ENCODE measurements at regions of chr15 and their contacts with region 1.

Region 1: DNA sequence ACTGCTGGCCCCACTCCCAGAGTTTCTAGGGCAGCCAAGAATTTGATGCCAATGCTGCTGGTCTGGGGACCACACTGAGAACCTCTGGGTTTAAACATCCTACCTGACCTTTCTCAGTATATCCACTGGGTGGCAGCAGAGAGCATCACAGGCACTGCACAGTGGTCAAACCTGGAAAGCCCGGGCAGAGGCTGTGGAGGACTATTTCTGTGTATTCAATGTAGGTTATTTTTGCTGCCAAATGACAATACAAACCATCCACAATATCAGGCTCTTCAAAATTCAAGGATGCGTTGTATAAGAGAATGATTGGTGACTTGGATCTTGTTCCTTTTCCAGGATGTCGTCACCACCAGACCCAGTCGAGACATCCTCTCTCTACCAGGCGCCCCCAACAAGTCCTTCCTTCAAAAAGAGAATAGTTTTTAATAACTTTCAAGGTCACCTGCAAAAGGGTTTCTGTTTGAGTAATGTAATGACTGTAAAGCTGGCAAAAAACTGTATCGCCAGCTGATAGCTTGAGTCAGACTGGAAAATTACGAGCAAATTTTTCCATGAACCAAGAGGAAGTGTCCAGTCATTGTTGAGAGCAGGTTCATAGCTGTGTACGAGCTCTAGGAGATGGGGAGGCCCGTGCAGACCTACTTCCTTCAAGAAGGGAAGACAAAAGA is 30.5 kb upstream of the MYZAP start:
- DNase-seq: peak; percentile 70 to 82 (median 80)
- ATAC-seq: peak; percentile 84 to 92 (median 88)
- H3K4me3 ChIP-seq: peak overlapping the region in 5 of 12 donors; percentile 1 to 36 (median 18)
- H3K27ac ChIP-seq: peak overlapping the region; percentile 6 to 82 (median 72)
- H3K4me1 ChIP-seq: peaks cover 0 to 36% (median 20%) of the 10 kb centered on the region in 12 donors
- H3K27me3 ChIP-seq: no peaks in the 10 kb centered on the region
- CTCF ChIP-seq: peak; percentile 84 to 97 (median 93)
- POLR2A ChIP-seq: no peak

Region 2: DNA sequence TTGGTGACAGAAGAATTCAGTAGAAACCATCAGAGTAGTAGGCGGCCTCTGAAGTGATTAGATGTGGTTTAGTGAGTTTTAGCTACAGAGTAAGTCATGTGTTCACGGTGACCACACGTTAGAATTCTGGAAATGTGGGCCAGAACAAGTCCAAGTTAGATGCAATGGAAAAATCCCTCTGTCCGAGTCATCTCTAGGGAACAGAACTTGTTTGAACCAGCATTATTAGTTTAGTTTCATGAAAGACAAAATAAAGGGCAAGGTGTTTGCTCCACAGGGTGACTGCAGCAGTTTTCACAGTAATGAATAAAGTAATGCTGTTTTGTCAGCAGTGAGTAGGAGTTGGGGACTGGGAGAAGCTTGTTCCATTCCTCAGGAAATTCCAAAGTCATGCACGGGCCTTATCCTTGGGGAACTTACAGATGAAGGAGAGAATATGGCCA is 84.6 kb before region 1 on chr15:
- intact Hi-C with region 1: no loop called
- DNase-seq: no peak
- ATAC-seq: peak; percentile 30 to 75 (median 74)
- H3K4me3 ChIP-seq: no peak overlapping the region
- H3K27ac ChIP-seq: peak overlapping the region in 5 of 12 donors; percentile 12 to 63 (median 52)
- H3K4me1 ChIP-seq: peaks cover 0 to 22% (median 0%) of the 10 kb centered on the region in 12 donors
- H3K27me3 ChIP-seq: no peaks in the 10 kb centered on the region
- CTCF ChIP-seq: no peak
- POLR2A ChIP-seq: no peak

Region 3: GRCh38 chr15:57611938-57612337 is 50.8 kb after region 1 on chr15:
- intact Hi-C with region 1: loop called in 5 of 10 experiments (anchors 2 to 10 kb)
- DNase-seq: peak in 2 of 5 donors; percentile 54 to 67
- ATAC-seq: peak; percentile 34 to 73 (median 42)
- H3K4me3 ChIP-seq: no peak overlapping the region
- H3K27ac ChIP-seq: peak overlapping the region; percentile 69 to 96 (median 82)
- H3K4me1 ChIP-seq: peaks cover 5 to 82% (median 40%) of the 10 kb centered on the region in 12 donors
- H3K27me3 ChIP-seq: no peaks in the 10 kb centered on the region
- CTCF ChIP-seq: peak; percentile 9 to 59 (median 42)
- POLR2A ChIP-seq: no peak

Region 4: GRCh38 chr15:57647791-57648130 is 86.6 kb after region 1 on chr15:
- intact Hi-C with region 1: loop called in 3 of 10 experiments (anchors 5 kb)
- DNase-seq: peak in 2 of 5 donors; percentile 27 to 62
- ATAC-seq: peak; percentile 49 to 70 (median 62)
- H3K4me3 ChIP-seq: peak overlapping the region in 3 of 12 donors; percentile 30 to 57 (median 44)
- H3K27ac ChIP-seq: peak overlapping the region; percentile 58 to 84 (median 74)
- H3K4me1 ChIP-seq: peaks cover 0 to 74% (median 21%) of the 10 kb centered on the region in 12 donors
- H3K27me3 ChIP-seq: no peaks in the 10 kb centered on the region
- CTCF ChIP-seq: no peak
- POLR2A ChIP-seq: peak in 1 of 2 donors; percentile 46

Region 5: GRCh38 chr15:57720867-57721266 is 159.7 kb after region 1 on chr15:
- intact Hi-C with region 1: loop called in 2 of 10 experiments (anchors 10 kb)
- DNase-seq: no peak
- ATAC-seq: no peak
- H3K4me3 ChIP-seq: no peak overlapping the region
- H3K27ac ChIP-seq: no peak overlapping the region
- H3K4me1 ChIP-seq: peaks cover 0 to 11% (median 0%) of the 10 kb centered on the region in 12 donors
- H3K27me3 ChIP-seq: no peaks in the 10 kb centered on the region
- CTCF ChIP-seq: no peak
- POLR2A ChIP-seq: no peak

Region 6: DNA sequence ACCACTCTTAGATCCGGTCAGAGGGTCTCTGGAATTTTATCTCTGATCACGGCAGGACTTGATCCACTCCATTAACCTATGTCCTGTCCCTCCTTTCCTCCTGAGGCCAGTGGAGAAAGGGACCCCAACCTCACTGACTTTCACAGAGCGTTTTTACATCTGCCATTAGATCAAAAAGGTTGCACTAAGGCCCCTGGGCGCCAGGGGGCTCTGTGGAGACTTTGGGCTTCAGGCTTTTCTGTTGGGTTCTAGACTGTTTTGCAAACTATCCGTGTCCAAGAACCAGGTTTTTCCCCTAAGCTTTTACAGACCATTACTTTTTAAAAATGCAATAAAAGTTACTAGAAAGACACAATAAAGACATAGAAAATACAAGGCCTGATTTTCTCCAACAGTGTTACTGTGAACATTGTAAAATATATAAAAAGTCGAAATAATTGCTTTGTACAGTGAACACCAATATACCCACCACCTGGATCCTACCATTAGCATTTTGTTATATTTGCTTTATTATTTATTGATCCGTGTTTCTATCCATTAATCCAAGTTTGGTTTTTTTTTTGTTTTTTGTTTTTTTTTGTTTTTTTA is 305.1 kb after region 1 on chr15:
- intact Hi-C with region 1: loop called in 9 of 10 experiments (anchors 2 to 10 kb)
- DNase-seq: peak; percentile 28 to 67 (median 52)
- ATAC-seq: peak in 2 of 4 donors; percentile 54 to 62
- H3K4me3 ChIP-seq: no peak overlapping the region
- H3K27ac ChIP-seq: no peak overlapping the region
- H3K4me1 ChIP-seq: peaks cover 0 to under 1% (median 0%) of the 10 kb centered on the region in 12 donors
- H3K27me3 ChIP-seq: peaks cover 0 to 6% (median 0%) of the 10 kb centered on the region in 9 donors
- CTCF ChIP-seq: peak; percentile 64 to 85 (median 80)
- POLR2A ChIP-seq: no peak

Region 7: DNA sequence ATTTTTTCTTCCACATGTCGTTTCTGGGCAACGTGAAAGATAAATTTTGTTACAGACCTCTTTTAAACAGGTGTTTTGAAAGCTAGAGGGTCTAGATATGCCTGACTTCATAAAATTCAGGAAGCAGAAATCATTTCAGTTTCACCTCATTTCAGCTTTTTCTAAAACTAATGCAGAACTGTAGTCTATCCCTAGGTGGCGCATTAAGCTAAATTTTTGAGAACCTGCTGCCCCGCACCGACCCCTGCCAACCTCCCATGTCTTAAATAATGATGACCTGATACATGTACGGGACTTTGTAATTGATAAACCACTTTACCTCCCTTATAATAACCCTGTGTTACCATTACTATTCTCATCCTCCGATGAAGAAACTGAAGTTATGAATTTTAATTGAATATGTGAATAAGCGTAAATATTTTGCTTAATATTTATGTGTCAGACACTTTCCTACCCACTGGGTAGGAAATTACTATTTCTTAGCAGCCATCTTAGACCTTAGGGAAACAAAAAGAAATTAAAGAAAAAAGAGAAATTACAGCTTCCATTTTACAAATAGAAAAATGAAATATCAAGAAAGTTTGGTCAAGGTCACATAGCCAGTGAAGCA is 1971.7 kb after region 1 on chr15:
- intact Hi-C with region 1: no loop called
- DNase-seq: no peak
- ATAC-seq: peak in 1 of 4 donors; percentile 50
- H3K4me3 ChIP-seq: no peak overlapping the region
- H3K27ac ChIP-seq: no peak overlapping the region
- H3K4me1 ChIP-seq: peaks cover 0 to 19% (median 0%) of the 10 kb centered on the region in 12 donors
- H3K27me3 ChIP-seq: peaks cover 0 to 14% (median 0%) of the 10 kb centered on the region in 9 donors
- CTCF ChIP-seq: peak; percentile 54 to 81 (median 62)
- POLR2A ChIP-seq: no peak

Measured in heart left ventricle (tissue), 16 donors.